Posterior vena cava (tissue), 2 donors: ENCODE measurements at regions of chr15 and their contacts with region 1.

Region 1: DNA sequence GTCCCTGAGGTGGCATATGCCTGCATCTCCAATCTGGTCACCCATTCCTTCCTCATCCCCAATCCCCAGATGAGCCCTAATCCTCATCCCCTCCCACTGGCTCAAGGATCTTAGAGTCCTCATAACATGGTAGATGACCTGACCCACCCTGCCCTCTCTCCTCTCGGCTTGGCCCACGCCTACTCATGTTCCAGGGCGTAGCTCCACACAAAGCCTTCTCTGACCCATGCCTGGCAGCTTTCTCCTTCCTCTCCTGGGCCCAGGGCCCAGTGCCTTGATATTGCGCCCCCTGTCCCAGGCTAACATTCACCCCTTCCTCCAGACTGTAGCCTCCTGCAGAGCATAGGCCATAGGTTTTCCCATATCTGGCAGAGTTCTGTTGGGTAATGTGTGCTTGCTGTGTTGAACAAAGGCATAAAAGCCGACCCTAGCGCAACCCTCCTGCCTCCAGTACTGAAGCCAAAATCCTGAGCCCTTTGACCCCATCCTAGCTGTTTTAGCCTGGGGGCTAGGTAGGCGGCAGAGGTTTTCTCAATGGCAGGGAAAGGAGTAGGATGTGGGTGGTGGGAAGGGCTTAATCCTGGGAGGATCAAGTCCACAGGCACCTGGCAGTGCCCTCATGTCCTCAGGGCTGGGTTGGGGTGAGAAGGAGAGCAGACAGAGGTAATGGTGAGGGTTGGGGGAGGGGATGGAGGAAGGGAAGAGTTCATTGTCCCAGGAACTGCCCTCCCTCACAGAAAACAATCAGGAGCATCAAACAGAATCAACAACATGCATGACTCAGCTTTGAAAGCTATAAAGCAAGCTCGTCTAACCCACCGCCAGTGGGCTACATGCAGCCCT is 35.5 kb downstream of the MESD start:
- DNase-seq: peak; percentile 49

Region 2: GRCh38 chr15:80418892-80419537 is 535.1 kb before region 1 on chr15:
- intact Hi-C with region 1: no loop called
- DNase-seq: no peak

Region 3: DNA sequence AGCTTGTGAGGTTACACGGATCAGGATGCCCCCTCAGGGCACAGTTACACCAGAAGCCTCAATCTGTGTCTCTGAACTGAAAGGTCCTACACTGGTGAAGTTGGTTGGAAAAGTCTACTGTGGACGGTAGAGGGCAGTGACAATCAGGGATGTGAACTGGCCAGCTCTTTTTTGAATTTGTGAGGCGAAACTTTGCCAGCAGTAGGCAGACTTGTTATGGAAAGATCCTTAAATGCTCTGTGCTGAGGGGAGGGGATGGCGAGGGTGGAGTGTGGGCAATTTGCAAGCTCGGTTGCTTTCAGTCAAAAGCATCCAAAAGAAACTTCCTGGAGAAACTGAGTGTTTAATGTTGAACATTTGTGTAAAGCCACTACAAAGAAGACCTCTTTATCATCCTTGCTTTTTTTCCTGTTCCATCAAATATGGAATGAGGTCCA is 386.4 kb before region 1 on chr15:
- intact Hi-C with region 1: loop called in 1 of 2 experiments (anchors 10 kb)
- DNase-seq: no peak

Region 4: GRCh38 chr15:81111510-81112470 is 157.6 kb after region 1 on chr15:
- intact Hi-C with region 1: no loop called
- DNase-seq: no peak

Region 5: GRCh38 chr15:81286621-81287121 is 332.5 kb after region 1 on chr15:
- intact Hi-C with region 1: no loop called
- DNase-seq: no peak